SK-N-SH (cell line): ENCODE measurements at regions of chr1 and their contacts with region 1.

Region 1: GRCh38 chr1:113978863-113979702 is at the start of gene OLFML3:
- DNase-seq: peak; percentile 83
- H3K4me3 ChIP-seq: peak within 1 kb of the TSS; percentile 37 to 58
- H3K27ac ChIP-seq: peak within 1 kb of the TSS; percentile 96
- H3K4me1 ChIP-seq: peaks cover 37 to 57% of the 10 kb centered on the region in 2 experiments
- H3K27me3 ChIP-seq: no peaks in the 10 kb centered on the region
- CTCF ChIP-seq: peak; percentile 85
- EP300 ChIP-seq: peak; percentile 53 to 96
- RAD21 ChIP-seq: peak; percentile 75
- polyA plus RNA-seq, gene OLFML3: 26.1 and 28.3 TPM in 2 replicates

Region 2: DNA sequence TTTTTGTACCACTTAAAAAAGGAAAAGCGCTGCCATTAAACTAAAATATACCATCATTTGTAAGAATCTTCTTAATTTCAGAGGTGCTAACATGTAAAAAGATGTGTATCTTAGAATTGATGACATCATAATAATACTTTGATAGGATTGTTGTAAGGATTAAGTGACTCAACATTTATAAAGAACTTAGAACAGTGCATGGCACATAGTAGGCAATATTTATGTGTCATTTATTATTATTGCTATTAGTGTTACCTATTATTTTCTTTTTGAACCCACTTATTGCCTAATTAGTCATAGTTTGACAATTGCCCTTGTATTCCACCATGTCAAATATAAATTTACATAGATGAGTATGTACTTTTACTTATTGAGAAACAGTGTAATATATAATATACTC is 28.1 kb before region 1 on chr1:
- CTCF ChIA-PET with region 1: interaction called, 31 read pairs
- POLR2A ChIA-PET with region 1: no interaction called
- DNase-seq: no peak
- H3K4me3 ChIP-seq: no peak overlapping the region
- H3K27ac ChIP-seq: no peak overlapping the region
- H3K4me1 ChIP-seq: peaks cover 3 to 19% of the 10 kb centered on the region in 2 experiments; a peak in 3 of 4 replicates
- H3K27me3 ChIP-seq: no peaks in the 10 kb centered on the region
- CTCF ChIP-seq: no peak
- EP300 ChIP-seq: no peak
- RAD21 ChIP-seq: no peak

Region 3: GRCh38 chr1:113990961-113991360 is 11.9 kb after region 1 on chr1:
- CTCF ChIA-PET with region 1: interaction called, 21 read pairs
- POLR2A ChIA-PET with region 1: no interaction called
- DNase-seq: no peak
- H3K4me3 ChIP-seq: no peak overlapping the region
- H3K27ac ChIP-seq: no peak overlapping the region
- H3K4me1 ChIP-seq: no peaks in the 10 kb centered on the region
- H3K27me3 ChIP-seq: no peaks in the 10 kb centered on the region
- CTCF ChIP-seq: no peak
- EP300 ChIP-seq: no peak
- RAD21 ChIP-seq: no peak

Region 4: DNA sequence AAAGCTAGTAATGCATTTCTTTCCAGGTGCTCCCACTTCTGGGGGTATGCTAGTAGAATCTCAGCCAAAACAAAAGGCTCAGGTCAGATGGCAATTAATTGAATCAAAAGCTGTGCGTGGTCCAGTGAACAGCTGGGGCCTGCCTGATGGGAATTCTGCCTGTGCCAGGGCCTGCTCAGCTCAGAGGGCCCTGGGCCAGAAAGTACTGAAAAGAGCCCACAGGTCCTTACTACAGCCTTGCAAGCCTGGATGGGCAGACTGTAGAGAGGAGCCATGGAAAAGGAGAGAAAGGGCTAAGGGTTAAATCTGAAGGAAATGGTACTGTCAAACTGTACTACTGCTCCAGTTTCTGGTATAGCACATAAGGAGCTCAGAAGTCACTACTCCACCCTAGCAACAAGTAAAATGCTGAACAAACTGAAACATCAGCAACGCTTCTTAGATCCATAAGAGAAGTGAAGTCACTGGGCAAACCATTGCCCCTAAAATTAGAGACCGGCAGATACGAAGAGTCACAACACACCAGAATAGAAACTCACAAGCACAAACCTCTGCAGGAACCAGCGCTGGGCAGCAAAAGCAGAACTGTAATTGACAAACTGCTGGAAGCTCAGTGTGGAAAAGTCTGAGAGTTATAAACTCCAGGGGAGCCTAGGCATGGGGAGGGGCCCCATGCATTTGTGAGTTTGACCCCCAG is 295.7 kb after region 1 on chr1:
- CTCF ChIA-PET with region 1: interaction called, 15 read pairs
- POLR2A ChIA-PET with region 1: no interaction called
- DNase-seq: no peak
- H3K4me3 ChIP-seq: no peak overlapping the region
- H3K27ac ChIP-seq: no peak overlapping the region
- H3K4me1 ChIP-seq: peaks cover 0 to 5% of the 10 kb centered on the region in 2 experiments; a peak in 1 of 4 replicates
- H3K27me3 ChIP-seq: peaks cover 29% of the 10 kb centered on the region; the same call in 1 of the 2 replicates
- CTCF ChIP-seq: no peak
- EP300 ChIP-seq: no peak
- RAD21 ChIP-seq: no peak

Region 5: DNA sequence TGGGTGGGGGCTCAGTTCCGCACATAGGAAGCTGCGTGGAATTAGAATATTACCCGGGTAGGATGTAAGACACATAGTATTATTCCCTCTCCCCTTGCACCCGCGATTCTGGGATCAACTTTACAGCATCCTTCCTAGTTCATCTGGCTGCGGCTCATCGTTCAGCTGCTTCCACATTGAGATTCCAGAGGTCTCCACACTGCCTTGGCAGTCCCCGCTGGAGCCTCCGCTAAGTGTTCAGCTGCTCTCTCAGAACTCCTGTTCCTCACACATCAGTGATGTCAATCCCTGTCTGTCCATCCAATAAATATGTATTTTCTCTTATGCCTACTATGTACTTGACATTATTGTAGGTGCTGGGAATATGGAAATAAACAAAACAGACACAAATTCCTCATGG is 310.2 kb after region 1 on chr1:
- CTCF ChIA-PET with region 1: interaction called, 12 read pairs
- POLR2A ChIA-PET with region 1: no interaction called
- DNase-seq: no peak
- H3K4me3 ChIP-seq: no peak overlapping the region
- H3K27ac ChIP-seq: no peak overlapping the region
- H3K4me1 ChIP-seq: peaks cover 0 to 4% of the 10 kb centered on the region in 2 experiments; a peak in 1 of 4 replicates
- H3K27me3 ChIP-seq: peaks cover 7% of the 10 kb centered on the region; the same call in 1 of the 2 replicates
- CTCF ChIP-seq: no peak
- EP300 ChIP-seq: no peak
- RAD21 ChIP-seq: no peak